ENCODE measurements at regions of chr17 and their contacts with region 1.

Region 1: DNA sequence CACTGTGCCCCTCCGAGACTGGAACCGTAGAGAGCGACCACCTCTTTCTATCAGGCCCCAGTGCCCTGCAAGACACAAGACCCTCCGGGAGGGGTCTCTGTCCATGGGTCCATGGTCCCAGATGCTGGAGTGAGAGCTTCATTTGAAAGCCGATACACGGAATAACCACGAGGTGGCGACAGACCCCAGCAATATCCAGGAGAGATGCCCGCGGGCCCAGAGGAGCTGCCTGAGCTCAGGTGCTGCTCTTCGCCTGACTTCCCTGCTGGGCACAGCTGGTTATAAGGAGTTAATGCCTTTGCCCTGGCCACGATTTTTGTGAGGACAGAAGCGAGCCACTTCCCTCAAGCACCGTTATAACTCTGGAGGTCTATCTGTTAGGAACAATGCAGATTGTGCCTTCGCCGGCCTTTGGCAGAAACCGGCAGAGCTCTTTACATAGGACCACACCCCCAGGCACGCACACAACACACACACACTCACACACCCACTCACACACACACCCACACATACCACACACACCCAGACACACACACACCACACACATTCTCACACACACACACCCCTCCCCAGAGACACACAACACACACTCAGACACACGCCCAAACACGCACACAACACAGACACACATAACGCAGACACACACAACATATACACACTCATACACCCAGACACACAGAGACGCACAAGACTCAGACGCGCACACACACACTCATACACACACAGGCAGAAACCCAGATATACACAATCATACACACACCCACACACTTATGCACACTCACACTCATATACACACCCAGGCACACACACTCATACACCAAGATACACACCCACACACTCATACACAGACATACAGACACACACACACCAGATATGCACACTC is 436.4 kb downstream of the SOX9 start:
- DNase-seq: peak in 1 of 2 experiments; percentile 88
- H3K4me3 ChIP-seq: no peak overlapping the region
- H3K27ac ChIP-seq: no peak overlapping the region
- H3K4me1 ChIP-seq: peaks cover 0 to 10% (median 2%) of the 10 kb centered on the region in 4 experiments; a peak in 4 of 7 replicates
- H3K27me3 ChIP-seq: no peaks in the 10 kb centered on the region
- CTCF ChIP-seq: peak; percentile 73 to 99 (median 96)
- EP300 ChIP-seq: no peak; a peak in 1 of 3 replicates
- POLR2A ChIP-seq: no peak
- RAD21 ChIP-seq: peak; percentile 92 to 95

Region 2: DNA sequence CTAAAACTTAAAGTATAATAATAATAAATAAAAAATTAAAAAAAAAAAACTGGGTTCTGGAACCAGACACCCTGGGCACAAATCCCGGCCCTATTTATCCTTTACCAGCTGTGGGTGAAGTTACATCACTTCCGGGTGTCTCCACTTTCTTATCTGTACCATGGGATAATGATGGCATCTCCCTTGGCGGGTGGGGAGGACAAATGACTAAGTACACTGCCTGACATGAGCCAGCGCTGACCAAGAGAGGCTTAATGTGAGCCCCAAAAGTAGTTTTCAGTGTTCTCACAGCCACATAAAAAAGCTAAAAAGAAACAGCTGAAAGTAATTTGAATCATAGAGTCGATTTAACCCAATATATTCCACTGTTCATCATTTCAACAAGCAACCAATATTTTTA is 11.4 kb before region 1 on chr17:
- CTCF ChIA-PET with region 1: interaction called, 11 read pairs
- POLR2A ChIA-PET with region 1: no interaction called
- DNase-seq: no peak
- H3K4me3 ChIP-seq: no peak overlapping the region
- H3K27ac ChIP-seq: no peak overlapping the region
- H3K4me1 ChIP-seq: no peaks in the 10 kb centered on the region
- H3K27me3 ChIP-seq: no peaks in the 10 kb centered on the region
- CTCF ChIP-seq: no peak
- EP300 ChIP-seq: no peak
- POLR2A ChIP-seq: no peak
- RAD21 ChIP-seq: no peak

Region 3: DNA sequence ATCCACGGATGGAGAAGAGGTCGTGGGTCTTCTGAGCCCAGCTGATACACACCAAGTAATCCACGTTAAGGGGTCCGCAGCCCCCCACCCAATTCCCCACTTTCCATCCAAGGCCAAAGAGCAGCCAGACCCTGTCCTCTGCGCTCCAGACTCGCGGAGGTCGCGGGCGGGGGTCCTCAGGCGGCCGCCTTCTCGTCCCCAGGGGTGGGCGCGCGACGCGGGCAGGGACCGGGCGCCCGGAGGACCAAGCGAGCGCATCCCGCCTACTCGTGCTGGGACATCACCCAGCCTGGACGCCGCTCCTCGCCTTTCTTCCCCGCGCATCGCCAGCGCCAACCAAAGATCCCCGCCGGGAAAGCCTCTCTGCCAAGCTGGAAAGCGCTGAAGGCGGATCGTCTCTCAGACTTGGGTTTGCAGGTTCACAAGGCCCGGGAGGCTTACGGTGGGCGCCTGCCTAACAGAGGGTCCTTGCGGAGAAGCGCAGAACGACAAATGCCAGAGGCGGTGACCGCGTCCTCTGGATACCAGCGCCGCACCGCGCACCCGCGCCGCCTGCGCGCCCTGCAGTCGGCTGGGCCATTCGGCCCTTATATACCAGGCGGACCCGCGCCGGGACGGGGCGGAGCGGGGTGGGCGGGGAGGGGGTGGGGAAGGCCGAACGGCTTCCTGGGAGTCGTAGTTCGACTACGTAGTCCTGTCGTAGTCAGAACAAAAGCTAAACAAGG is 35.2 kb after region 1 on chr17:
- CTCF ChIA-PET with region 1: interaction called, 17 read pairs
- POLR2A ChIA-PET with region 1: interaction called, 4 read pairs
- DNase-seq: peak; percentile 58 to 90
- H3K4me3 ChIP-seq: peak overlapping the region; percentile 56 to 74 (median 70)
- H3K27ac ChIP-seq: no peak overlapping the region
- H3K4me1 ChIP-seq: peaks cover 9 to 28% (median 12%) of the 10 kb centered on the region in 4 experiments
- H3K27me3 ChIP-seq: peaks cover 8 to 29% (median 22%) of the 10 kb centered on the region in 4 experiments
- CTCF ChIP-seq: no peak
- EP300 ChIP-seq: no peak
- POLR2A ChIP-seq: peak; percentile 99
- RAD21 ChIP-seq: no peak

Region 4: DNA sequence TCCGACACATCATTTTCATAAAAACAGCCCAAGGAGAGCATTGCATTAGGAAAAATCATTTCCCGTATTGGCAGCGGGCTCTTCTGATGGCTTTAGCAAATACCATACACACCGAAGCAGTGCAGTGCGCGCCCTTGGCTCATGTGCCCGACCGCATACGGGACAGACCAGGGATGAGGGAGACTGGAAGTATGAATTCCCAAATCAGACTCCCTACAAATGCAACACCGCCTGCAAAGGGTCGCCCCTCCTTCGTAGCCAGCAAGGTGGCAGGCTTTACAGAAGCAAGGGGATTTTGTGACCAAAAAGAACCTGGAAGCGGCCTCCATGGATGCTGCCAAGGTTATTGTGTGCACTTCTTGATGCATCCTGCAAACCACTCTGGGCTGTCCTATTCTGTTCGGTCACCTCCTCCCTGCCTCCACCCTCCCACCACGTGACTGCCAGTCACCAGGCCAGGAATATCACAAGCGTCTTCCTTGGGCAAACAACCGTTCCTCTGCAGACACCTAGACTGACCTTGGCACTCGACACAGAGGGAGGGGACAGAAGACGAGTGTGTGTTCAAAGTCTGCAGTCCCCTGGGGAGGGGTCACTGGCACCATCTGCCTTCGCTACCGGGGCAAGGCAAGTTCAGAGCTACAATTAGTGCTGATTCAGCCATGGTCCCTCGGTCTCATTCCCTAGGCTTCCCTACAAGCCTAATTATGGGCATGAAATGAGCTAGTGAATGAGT is 74.9 kb after region 1 on chr17:
- CTCF ChIA-PET with region 1: interaction called, 30 read pairs
- POLR2A ChIA-PET with region 1: no interaction called
- DNase-seq: no peak
- H3K4me3 ChIP-seq: no peak overlapping the region
- H3K27ac ChIP-seq: no peak overlapping the region
- H3K4me1 ChIP-seq: no peaks in the 10 kb centered on the region
- H3K27me3 ChIP-seq: no peaks in the 10 kb centered on the region
- CTCF ChIP-seq: no peak
- EP300 ChIP-seq: no peak
- POLR2A ChIP-seq: no peak
- RAD21 ChIP-seq: no peak

Region 5: DNA sequence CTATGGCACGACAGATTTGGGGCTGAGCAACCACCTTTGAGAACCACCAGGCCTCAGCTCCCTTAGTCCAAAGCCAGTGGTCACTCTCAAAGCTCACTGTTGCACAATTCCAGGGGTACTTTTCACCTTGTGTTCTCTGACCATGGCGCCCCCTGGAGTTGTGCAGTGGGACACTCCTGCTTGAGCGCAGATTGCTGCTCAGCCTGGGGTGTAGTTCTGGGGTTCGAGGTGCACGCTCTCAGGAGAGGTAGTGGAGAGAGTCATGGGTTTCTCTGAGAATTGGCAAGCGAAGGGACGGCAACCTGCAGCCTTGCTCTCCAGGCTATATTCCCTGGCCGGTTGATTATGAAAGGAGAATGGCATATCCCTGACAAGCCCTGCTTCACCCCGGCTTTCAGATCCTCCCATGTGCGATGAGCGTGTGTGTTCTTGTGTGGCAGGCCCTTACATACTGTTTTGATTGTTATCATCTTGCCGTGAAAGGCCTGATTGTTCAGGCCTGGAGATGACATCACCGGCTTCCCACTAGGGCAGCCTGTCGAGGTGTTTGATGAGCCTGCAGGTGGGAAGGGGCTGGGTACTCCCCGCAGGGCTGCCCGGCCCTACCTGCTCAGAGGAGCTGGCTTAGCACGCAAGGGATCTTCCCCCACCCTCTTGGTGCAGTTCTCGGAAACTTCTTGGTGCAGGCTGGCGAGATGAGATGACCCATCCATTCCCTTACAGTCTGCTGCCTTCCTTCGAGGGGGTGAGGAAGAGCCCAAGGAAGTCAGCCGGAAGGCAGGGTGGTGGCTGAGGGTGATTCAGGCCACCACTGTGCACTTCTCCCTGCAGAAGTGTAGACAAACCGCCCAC is 104.1 kb after region 1 on chr17:
- CTCF ChIA-PET with region 1: interaction called, 27 read pairs
- POLR2A ChIA-PET with region 1: no interaction called
- DNase-seq: no peak
- H3K4me3 ChIP-seq: no peak overlapping the region
- H3K27ac ChIP-seq: no peak overlapping the region
- H3K4me1 ChIP-seq: peaks cover 0 to 9% (median 1%) of the 10 kb centered on the region in 4 experiments; a peak in 3 of 7 replicates
- H3K27me3 ChIP-seq: no peaks in the 10 kb centered on the region; a peak in 1 of 7 replicates
- CTCF ChIP-seq: peak; percentile 4 to 42 (median 40); a peak in 2 of 4 replicates
- EP300 ChIP-seq: no peak
- POLR2A ChIP-seq: no peak
- RAD21 ChIP-seq: no peak; a peak in 1 of 4 replicates

Region 6: DNA sequence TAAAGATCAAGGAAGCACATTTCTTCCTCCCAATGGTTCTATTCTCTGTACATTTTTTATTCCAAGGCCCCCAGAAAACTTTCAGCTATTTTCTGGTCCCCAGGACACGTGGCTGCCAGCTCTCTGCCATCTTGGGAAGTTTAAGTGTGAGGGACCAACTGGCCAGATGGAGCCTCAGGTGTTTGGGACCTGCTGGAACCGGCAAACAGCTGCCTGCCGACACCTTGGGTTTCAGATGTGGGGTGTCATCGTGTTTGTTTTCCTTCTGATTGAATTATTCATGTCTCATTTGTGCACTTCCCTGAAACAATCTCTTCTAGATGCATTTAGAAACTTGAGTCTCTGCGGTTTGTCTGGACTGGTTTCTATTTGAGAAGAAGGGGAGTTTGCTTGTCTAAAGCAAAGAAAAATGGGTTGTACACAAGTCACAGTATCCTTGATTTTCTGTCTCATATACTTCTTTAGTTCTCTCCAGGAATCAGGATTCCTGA is 148.8 kb after region 1 on chr17:
- CTCF ChIA-PET with region 1: interaction called, 27 read pairs
- POLR2A ChIA-PET with region 1: no interaction called
- DNase-seq: no peak
- H3K4me3 ChIP-seq: no peak overlapping the region
- H3K27ac ChIP-seq: no peak overlapping the region
- H3K4me1 ChIP-seq: no peaks in the 10 kb centered on the region
- H3K27me3 ChIP-seq: no peaks in the 10 kb centered on the region; a peak in 1 of 7 replicates
- CTCF ChIP-seq: no peak
- EP300 ChIP-seq: no peak
- POLR2A ChIP-seq: no peak
- RAD21 ChIP-seq: no peak

Region 7: GRCh38 chr17:73166731-73167581 is 609.8 kb after region 1 on chr17:
- CTCF ChIA-PET with region 1: interaction called, 12 read pairs
- POLR2A ChIA-PET with region 1: no interaction called
- DNase-seq: no peak
- H3K4me3 ChIP-seq: peak overlapping the region in 1 of 4 experiments; percentile 71; a peak in 2 of 8 replicates
- H3K27ac ChIP-seq: no peak overlapping the region
- H3K4me1 ChIP-seq: peaks cover 4 to 20% (median 10%) of the 10 kb centered on the region in 4 experiments
- H3K27me3 ChIP-seq: peaks cover 12 to 48% (median 46%) of the 10 kb centered on the region in 4 experiments
- CTCF ChIP-seq: no peak
- EP300 ChIP-seq: no peak
- POLR2A ChIP-seq: no peak
- RAD21 ChIP-seq: no peak

Measured in H1 (cell line).